ENCODE measurements at regions of chr11 and their contacts with region 1.

Region 1: GRCh38 chr11:124070915-124071635 is 29.9 kb upstream of the OR10G7 start:
- DNase-seq: peak; percentile 52 to 80 (median 66)
- ATAC-seq: peak; percentile 72 to 84 (median 74)
- H3K4me3 ChIP-seq: no peak overlapping the region
- H3K27ac ChIP-seq: no peak overlapping the region
- H3K4me1 ChIP-seq: peaks cover 0 to 2% (median 0%) of the 10 kb centered on the region in 3 donors
- H3K27me3 ChIP-seq: no peaks in the 10 kb centered on the region
- CTCF ChIP-seq: peak; percentile 50 to 80 (median 58)

Region 2: DNA sequence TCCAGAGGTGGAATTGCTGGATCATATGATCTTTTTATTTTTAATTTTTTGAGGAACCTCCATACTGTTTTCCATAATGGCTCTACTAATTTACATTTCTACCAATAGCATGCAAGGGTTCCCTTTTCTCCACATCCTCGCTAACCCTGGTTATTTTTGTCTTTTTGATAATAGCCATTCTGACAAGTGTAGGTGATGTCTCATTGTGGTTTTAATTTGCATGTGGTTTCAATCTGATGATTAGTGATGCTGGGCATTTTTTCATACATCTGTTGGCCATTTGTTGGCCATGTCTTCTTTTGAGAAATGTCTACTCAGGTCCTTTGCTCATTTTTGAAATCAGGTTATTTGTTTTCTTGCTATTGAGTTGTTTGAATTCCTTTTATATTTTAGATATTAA is 147.0 kb before region 1 on chr11:
- intact Hi-C with region 1: no loop called
- DNase-seq: no peak
- ATAC-seq: no peak
- H3K4me3 ChIP-seq: no peak overlapping the region
- H3K27ac ChIP-seq: no peak overlapping the region
- H3K4me1 ChIP-seq: no peaks in the 10 kb centered on the region
- H3K27me3 ChIP-seq: no peaks in the 10 kb centered on the region
- CTCF ChIP-seq: no peak

Region 3: GRCh38 chr11:124329787-124330478 is 258.9 kb after region 1 on chr11:
- intact Hi-C with region 1: loop called in 1 of 3 experiments (anchors 10 kb)
- DNase-seq: no peak
- ATAC-seq: peak in 3 of 4 donors; percentile 70 to 77 (median 74)
- H3K4me3 ChIP-seq: no peak overlapping the region
- H3K27ac ChIP-seq: no peak overlapping the region
- H3K4me1 ChIP-seq: no peaks in the 10 kb centered on the region
- H3K27me3 ChIP-seq: peaks cover 0 to 11% (median 3%) of the 10 kb centered on the region in 4 donors
- CTCF ChIP-seq: no peak

Region 4: GRCh38 chr11:124592627-124593026 is 521.6 kb after region 1 on chr11:
- intact Hi-C with region 1: loop called in 1 of 3 experiments (anchors 10 kb)
- DNase-seq: no peak
- ATAC-seq: no peak
- H3K4me3 ChIP-seq: no peak overlapping the region
- H3K27ac ChIP-seq: no peak overlapping the region
- H3K4me1 ChIP-seq: no peaks in the 10 kb centered on the region
- H3K27me3 ChIP-seq: peaks cover 0 to 4% (median 1%) of the 10 kb centered on the region in 4 donors
- CTCF ChIP-seq: no peak